PC-3 (cell line): ENCODE measurements at regions of chr9 and their contacts with region 1.

Region 1: DNA sequence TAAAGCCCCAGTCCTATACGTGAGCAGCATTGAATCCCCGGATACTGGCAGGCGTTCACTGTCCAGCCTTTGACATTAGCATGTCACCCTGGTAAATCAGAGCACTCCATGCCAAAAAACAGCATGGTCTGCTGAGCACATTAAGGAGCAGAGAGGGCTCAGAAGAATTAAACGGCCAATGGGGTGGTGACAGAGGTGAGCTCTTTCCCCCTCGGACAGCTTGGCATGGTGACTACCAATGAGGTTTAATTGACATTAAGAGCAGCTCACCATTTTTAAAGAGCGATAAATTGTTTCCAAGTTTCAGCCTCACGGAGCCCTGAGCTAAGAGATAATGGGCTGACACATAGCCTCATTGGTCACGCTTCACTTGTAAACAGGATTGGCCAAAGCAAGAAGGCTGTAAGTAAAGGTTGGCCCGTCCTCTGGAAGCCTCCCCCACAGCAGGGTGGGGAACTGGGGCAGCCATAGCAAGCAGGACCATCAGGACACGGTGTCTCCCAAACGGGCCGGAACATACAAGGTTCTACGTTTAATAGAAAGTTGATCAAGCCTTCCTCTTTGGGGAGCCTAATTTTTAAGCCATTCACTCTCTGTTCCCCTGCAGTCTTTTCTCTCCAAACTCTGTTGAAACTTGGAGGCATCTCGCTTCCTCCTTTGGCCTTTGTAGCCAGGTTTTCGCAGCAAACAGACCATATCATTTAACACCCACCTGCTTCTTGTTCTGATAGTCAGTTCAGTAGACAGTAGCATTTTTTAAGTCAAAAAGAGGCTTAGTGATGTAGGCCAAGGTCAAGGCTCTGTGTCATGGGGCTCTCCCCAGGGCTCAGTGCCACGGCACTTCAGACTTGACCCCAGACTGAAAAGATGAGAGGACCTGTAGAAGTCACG is 25.9 kb downstream of the QRFP start:
- DNase-seq: no peak
- ATAC-seq: no peak
- H3K4me3 ChIP-seq: no peak overlapping the region
- H3K27ac ChIP-seq: no peak overlapping the region
- H3K4me1 ChIP-seq: no peaks in the 10 kb centered on the region
- H3K27me3 ChIP-seq: no peaks in the 10 kb centered on the region
- CTCF ChIP-seq: no peak

Region 2: GRCh38 chr9:130512199-130512598 is 358.5 kb before region 1 on chr9:
- CTCF ChIA-PET with region 1: no interaction called
- POLR2A ChIA-PET with region 1: no interaction called
- intact Hi-C with region 1: no loop called
- DNase-seq: no peak
- ATAC-seq: no peak
- H3K4me3 ChIP-seq: no peak overlapping the region
- H3K27ac ChIP-seq: no peak overlapping the region
- H3K4me1 ChIP-seq: no peaks in the 10 kb centered on the region
- H3K27me3 ChIP-seq: no peaks in the 10 kb centered on the region
- CTCF ChIP-seq: no peak

Region 3: GRCh38 chr9:130651752-130652151 is 219.0 kb before region 1 on chr9:
- CTCF ChIA-PET with region 1: no interaction called
- POLR2A ChIA-PET with region 1: interaction called, 22 read pairs
- intact Hi-C with region 1: no loop called
- DNase-seq: no peak
- ATAC-seq: no peak
- H3K4me3 ChIP-seq: no peak overlapping the region
- H3K27ac ChIP-seq: no peak overlapping the region
- H3K4me1 ChIP-seq: no peaks in the 10 kb centered on the region
- H3K27me3 ChIP-seq: no peaks in the 10 kb centered on the region
- CTCF ChIP-seq: no peak

Region 4: DNA sequence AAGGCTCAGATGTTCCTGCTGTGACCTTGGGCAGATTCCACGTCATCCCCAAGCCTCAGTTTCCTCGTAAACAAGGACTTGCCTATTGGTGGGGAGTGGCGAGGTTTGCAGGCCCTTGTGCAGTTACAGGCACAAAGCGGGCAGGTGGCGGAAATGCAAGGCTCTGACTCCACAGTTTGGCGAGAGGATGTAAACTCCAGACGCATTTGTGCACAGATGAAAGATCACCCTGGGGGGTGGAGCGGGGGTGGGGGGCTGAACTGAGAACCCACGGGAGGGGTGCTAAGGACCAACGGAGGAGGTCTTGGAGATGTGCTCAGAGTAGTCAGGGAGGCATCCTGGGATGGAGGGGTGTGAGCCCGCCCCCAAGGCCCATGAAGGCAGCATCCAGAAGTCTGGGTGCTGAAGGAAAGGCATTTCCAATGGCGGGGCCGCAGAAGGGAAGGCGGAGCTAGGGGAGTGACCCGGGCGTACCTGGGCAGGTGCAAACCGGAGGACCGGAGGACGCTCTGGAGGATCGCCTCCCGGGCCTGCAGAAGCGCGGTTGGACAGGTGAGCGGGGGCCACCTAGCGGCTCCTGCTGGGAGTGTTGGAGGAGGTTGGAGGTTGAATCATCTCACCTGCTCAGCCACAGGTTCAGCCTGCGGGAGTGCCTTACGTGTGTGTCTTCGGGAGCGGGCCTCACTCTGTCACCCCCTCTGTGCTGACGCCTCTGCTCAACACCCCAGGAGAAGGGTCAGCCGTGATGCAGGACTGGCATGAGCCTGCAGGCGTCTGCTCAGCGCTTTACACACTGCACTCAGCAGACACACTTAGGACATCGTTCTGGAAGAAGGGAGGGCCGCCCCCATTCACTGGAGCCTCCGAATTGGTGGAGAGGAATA is 70.2 kb after region 1 on chr9:
- CTCF ChIA-PET with region 1: interaction called, 4 read pairs
- POLR2A ChIA-PET with region 1: no interaction called
- intact Hi-C with region 1: loop called (anchors 1 kb)
- DNase-seq: peak; percentile 85
- ATAC-seq: peak; percentile 69
- H3K4me3 ChIP-seq: peak overlapping the region; percentile 44; the same call in 1 of the 2 replicates
- H3K27ac ChIP-seq: no peak overlapping the region
- H3K4me1 ChIP-seq: peaks cover 11% of the 10 kb centered on the region
- H3K27me3 ChIP-seq: peaks cover 8% of the 10 kb centered on the region; the same call in 1 of the 2 replicates
- CTCF ChIP-seq: peak; percentile 75

Region 5: DNA sequence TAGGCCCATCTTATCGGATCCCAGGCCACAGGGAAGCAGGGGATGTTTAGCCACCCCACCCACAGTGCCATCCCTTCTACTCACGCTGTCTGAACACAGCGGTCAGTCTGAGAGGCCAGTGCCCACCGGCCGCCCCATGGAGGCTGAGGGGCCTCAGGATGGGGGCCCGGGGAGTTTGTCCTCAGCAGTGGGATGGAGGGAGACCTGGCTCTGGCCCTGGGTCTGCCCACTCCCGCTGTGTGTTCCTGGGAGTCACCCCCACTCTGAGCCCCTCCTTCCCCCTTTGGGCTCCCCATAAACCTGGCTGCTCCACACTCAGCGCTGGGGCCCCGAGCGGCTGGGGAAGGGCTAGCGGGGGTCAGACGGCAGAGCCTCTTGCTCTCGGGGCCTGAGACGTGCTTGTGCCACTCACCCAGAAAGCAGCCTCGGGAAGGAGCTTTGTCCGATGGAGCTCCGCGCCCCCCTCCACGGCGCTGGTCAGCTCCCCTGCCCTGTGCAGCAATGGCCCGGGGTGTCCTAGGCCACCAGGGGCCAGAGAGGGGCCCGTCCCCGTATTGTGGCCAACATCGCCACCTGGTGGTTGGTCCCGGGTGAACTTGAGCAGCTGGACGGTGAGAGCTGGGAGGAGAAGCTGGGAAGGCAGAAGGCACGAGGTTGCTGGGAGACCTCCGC is 127.3 kb after region 1 on chr9:
- CTCF ChIA-PET with region 1: interaction called, 4 read pairs
- POLR2A ChIA-PET with region 1: no interaction called
- intact Hi-C with region 1: loop called (anchors 1 kb)
- DNase-seq: peak; percentile 71
- ATAC-seq: peak; percentile 84
- H3K4me3 ChIP-seq: no peak overlapping the region
- H3K27ac ChIP-seq: no peak overlapping the region
- H3K4me1 ChIP-seq: no peaks in the 10 kb centered on the region
- H3K27me3 ChIP-seq: no peaks in the 10 kb centered on the region
- CTCF ChIP-seq: peak; percentile 79

Region 6: GRCh38 chr9:131160416-131161112 is 289.8 kb after region 1 on chr9:
- CTCF ChIA-PET with region 1: no interaction called
- POLR2A ChIA-PET with region 1: no interaction called
- intact Hi-C with region 1: no loop called
- DNase-seq: no peak
- ATAC-seq: no peak
- H3K4me3 ChIP-seq: no peak overlapping the region
- H3K27ac ChIP-seq: no peak overlapping the region
- H3K4me1 ChIP-seq: no peaks in the 10 kb centered on the region
- H3K27me3 ChIP-seq: no peaks in the 10 kb centered on the region
- CTCF ChIP-seq: no peak